Activated CD8-positive, alpha-beta T cell treated with anti-CD3 and anti-CD28 coated beads, Interleukin-2, amount 10 ng/mL, durations not matched to agents 7 days and 5 days (primary cell): ENCODE measurements at regions of chr5 and their contacts with region 1.

Region 1: GRCh38 chr5:142145106-142145900 is 36.7 kb downstream of the NDFIP1 start:
- DNase-seq: peak; percentile 80
- ATAC-seq: peak; percentile 89
- H3K4me3 Mint-ChIP-seq: no peak overlapping the region
- H3K27ac Mint-ChIP-seq: no peak overlapping the region
- H3K4me1 Mint-ChIP-seq: peaks cover 3% of the 10 kb centered on the region
- H3K27me3 Mint-ChIP-seq: no peaks in the 10 kb centered on the region

Region 2: DNA sequence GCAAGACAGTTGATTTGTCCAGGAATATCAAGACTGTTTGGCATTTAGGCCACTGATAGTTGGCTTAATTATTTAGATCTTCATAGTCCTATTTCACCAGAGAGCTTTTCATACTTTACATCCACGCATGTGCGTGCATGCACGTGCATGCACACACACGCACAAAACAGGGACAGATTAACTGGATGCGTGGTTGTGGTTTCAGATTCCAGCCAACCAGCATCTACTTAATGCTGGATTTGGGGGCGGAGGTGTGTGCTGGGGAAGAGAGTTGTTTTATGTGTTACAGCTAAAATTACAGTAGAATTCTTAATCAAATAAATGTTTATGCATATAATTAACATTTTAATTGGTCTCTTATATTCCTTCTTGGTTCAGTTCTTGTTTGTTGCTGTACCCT is 169.1 kb before region 1 on chr5:
- CTCF ChIA-PET with region 1: interaction called, 85 read pairs
- POLR2A ChIA-PET with region 1: no interaction called
- DNase-seq: no peak
- ATAC-seq: no peak
- H3K4me3 Mint-ChIP-seq: no peak overlapping the region
- H3K27ac Mint-ChIP-seq: no peak overlapping the region
- H3K4me1 Mint-ChIP-seq: peaks cover 18% of the 10 kb centered on the region
- H3K27me3 Mint-ChIP-seq: no peaks in the 10 kb centered on the region

Region 3: GRCh38 chr5:141992349-141992963 is 152.8 kb before region 1 on chr5:
- CTCF ChIA-PET with region 1: interaction called, 199 read pairs
- POLR2A ChIA-PET with region 1: no interaction called
- DNase-seq: peak; percentile 87
- ATAC-seq: peak; percentile 91
- H3K4me3 Mint-ChIP-seq: no peak overlapping the region
- H3K27ac Mint-ChIP-seq: no peak overlapping the region
- H3K4me1 Mint-ChIP-seq: peaks cover 3% of the 10 kb centered on the region
- H3K27me3 Mint-ChIP-seq: no peaks in the 10 kb centered on the region

Region 4: DNA sequence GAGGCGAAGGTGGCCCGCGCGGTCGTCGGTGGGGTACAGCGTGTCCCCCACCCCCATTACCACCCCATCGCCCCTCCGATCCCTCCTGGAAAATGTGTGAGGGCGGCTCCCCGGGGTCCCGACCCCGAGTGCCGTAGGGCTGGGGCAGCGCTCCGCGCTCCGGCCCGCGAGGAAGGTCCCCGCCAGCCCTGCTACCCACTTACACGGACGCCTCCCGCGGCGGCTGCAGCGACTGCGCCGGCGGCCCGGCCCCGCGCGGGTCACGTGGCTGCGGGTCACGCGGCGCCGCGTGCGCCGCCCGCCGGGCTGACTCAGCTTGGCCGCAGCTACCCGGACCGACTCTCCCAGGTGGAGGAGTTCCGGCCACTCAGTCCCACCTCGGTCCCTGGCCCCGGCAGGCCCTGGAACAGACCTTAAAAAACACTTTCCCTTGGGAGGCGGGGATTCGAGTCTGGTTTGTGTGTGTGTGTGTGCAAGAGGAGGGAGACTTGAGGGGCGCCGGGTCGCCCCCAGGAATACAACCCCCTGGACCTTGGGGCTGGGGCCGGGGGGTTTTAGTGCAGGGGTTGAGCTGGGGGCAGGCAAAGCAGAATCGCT is 132.4 kb before region 1 on chr5 and contains the start of gene GNPDA1:
- CTCF ChIA-PET with region 1: interaction called, 257 read pairs
- POLR2A ChIA-PET with region 1: interaction called, 6 read pairs
- DNase-seq: peak; percentile 74
- ATAC-seq: peak; percentile 53
- H3K4me3 Mint-ChIP-seq: peak within 1 kb of the TSS; percentile 82
- H3K27ac Mint-ChIP-seq: peak within 1 kb of the TSS; percentile 93
- H3K4me1 Mint-ChIP-seq: peaks cover 85% of the 10 kb centered on the region
- H3K27me3 Mint-ChIP-seq: no peaks in the 10 kb centered on the region
- total RNA-seq, gene GNPDA1: 34.9 to 41.0 TPM

Region 5: DNA sequence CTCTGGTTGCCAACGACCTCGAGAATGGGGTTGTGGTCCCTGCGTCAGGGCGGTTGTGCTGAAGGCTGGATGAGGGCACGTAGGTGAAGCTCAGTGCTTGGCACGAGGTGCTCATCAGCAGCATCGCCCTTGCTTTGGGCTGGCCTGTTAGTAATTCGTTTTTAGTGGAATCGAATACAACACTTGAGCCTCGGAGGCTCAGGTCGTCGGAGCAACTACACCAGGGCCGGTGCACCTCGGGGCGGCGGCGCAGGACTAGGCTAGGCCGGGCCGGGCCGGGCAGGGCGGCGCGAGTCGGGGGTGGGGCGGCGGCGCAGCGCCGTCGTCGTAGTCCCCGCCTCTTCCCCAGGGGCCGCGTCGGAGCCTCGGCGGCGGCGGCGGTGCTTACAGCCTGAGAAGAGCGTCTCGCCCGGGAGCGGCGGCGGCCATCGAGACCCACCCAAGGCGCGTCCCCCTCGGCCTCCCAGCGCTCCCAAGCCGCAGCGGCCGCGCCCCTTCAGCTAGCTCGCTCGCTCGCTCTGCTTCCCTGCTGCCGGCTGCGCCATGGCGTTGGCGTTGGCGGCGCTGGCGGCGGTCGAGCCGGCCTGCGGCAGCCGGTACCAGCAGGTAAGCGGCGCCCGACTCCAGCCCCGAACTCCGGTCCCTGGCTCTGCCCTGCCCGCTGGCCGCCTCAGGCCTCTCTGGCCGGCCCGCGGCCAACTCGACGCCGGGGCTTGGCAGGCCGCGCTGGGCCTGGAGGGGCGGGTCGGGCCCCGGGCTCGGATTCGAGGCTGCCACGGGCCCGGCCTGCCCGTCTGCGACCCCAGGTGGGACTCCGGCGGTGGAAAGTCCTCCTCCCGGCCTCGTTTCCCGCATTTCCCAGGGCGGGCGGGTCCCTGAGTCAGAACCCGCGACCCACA is 36.6 kb before region 1 on chr5 and contains the start of gene NDFIP1:
- CTCF ChIA-PET with region 1: interaction called, 18 read pairs
- POLR2A ChIA-PET with region 1: interaction called, 9 read pairs
- DNase-seq: peak; percentile 87
- ATAC-seq: peak; percentile 90
- H3K4me3 Mint-ChIP-seq: peak within 1 kb of the TSS; percentile 93
- H3K27ac Mint-ChIP-seq: peak within 1 kb of the TSS; percentile 93
- H3K4me1 Mint-ChIP-seq: peaks cover 68% of the 10 kb centered on the region
- H3K27me3 Mint-ChIP-seq: no peaks in the 10 kb centered on the region
- total RNA-seq, gene NDFIP1: 47.2 TPM

Region 6: DNA sequence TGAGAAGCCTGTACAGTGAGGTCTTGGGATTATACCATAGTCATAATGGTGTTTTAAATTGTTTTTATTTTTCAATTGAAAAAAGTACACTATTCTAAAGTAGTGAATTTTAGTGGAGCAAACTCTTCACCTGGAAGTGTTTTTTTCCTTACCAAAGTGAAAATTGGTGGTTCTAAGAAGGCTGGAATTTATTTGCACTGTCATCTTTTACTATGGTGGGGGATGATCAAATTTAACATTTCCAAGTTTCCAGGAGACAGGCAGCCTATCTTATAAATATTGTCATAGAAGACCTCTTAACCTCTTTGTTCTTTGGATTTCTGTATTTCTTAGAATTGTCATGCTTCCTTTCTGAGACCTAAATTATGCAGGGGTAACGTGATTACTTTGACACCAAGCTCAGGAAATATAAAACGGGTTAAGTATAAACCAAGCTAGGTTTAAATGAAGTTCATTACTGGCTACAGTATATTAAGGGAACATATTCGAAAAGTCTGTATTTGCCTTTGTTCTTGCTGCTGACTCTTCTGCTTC is 16.6 kb before region 1 on chr5:
- CTCF ChIA-PET with region 1: interaction called, 23 read pairs
- POLR2A ChIA-PET with region 1: interaction called, 4 read pairs
- DNase-seq: no peak
- ATAC-seq: peak; percentile 77
- H3K4me3 Mint-ChIP-seq: peak overlapping the region; percentile 38
- H3K27ac Mint-ChIP-seq: peak overlapping the region; percentile 4
- H3K4me1 Mint-ChIP-seq: peaks cover 47% of the 10 kb centered on the region
- H3K27me3 Mint-ChIP-seq: no peaks in the 10 kb centered on the region